B cell (primary cell): ENCODE measurements at regions of chr1 and their contacts with region 1.

Region 1: DNA sequence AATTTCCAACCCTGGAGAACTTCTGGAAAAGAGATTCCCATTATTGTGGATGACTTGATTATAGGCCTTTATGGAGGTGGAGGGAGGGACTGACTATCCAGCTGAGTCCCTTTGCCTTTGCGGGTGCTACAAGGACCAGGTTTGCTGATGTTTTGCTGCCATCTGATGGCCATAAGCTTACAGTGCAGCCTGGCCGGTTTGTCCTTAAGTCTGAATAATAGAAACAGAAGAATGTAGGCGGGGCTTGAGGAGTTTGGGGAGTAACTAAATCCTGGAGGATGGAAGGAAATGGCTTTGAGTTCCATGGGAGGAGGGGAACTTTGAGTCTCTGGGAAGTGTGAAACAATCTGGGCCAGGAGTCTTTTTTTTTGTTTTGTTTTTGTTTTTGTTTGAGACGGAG is 55.7 kb upstream of the CD1D start:
- DNase-seq: peak; percentile 86
- ATAC-seq: peak; percentile 89
- H3K4me3 ChIP-seq: no peak overlapping the region
- H3K4me3 Mint-ChIP-seq: no peak overlapping the region
- H3K27ac ChIP-seq: no peak overlapping the region
- H3K27ac Mint-ChIP-seq: peak overlapping the region; percentile 5
- H3K4me1 ChIP-seq: peaks cover 0 to 5% of the 10 kb centered on the region in 2 donors
- H3K4me1 Mint-ChIP-seq: peaks cover 3% of the 10 kb centered on the region
- H3K27me3 ChIP-seq: peaks cover 0 to 18% (median 9%) of the 10 kb centered on the region in 4 experiments
- H3K27me3 Mint-ChIP-seq: peaks cover 25% of the 10 kb centered on the region
- CTCF ChIP-seq: peak; percentile 86

Region 2: DNA sequence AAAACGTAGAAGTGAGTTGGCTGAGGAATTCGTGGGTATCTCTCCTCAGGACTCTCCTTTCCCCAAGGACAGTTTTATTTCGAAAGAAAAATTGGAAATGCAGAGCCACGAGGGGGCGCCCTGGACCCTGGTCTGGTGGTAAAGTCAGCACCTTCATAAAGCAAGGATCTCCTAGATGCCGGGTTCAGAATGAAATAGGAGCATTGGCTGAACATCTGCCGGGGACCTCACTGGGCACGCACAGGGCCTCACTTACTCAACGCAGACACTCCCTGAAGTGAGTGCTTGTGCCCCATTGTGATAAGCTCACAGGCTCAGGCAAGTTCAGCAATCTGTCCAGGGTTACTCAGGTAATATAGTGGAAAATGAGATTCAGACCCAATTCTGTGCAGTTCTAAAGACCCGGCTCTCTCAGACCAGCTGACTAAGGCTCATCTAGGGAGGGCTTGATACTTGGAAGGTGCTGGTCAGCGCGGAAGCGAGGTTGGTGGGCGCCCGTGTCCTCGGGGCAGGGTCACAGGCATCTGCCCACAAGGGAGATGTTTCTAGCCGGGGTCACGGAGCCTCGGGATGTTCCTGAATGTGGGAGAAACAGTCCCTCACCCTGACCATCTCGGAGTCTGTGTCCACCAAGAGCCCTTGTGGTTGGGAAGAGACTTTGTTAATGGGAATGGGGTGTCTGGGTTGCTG is 931.2 kb before region 1 on chr1:
- CTCF ChIA-PET with region 1: interaction called, 10 read pairs
- POLR2A ChIA-PET with region 1: no interaction called
- intact Hi-C with region 1: loop called (anchors 1 kb)
- DNase-seq: peak; percentile 76
- ATAC-seq: no peak
- H3K4me3 ChIP-seq: no peak overlapping the region
- H3K4me3 Mint-ChIP-seq: no peak overlapping the region
- H3K27ac ChIP-seq: no peak overlapping the region
- H3K27ac Mint-ChIP-seq: no peak overlapping the region
- H3K4me1 ChIP-seq: peaks cover 3 to 4% of the 10 kb centered on the region in 2 donors
- H3K4me1 Mint-ChIP-seq: peaks cover 2% of the 10 kb centered on the region
- H3K27me3 ChIP-seq: peaks cover 0 to 34% (median 10%) of the 10 kb centered on the region in 4 experiments
- H3K27me3 Mint-ChIP-seq: peaks cover 42% of the 10 kb centered on the region
- CTCF ChIP-seq: peak; percentile 76

Region 3: DNA sequence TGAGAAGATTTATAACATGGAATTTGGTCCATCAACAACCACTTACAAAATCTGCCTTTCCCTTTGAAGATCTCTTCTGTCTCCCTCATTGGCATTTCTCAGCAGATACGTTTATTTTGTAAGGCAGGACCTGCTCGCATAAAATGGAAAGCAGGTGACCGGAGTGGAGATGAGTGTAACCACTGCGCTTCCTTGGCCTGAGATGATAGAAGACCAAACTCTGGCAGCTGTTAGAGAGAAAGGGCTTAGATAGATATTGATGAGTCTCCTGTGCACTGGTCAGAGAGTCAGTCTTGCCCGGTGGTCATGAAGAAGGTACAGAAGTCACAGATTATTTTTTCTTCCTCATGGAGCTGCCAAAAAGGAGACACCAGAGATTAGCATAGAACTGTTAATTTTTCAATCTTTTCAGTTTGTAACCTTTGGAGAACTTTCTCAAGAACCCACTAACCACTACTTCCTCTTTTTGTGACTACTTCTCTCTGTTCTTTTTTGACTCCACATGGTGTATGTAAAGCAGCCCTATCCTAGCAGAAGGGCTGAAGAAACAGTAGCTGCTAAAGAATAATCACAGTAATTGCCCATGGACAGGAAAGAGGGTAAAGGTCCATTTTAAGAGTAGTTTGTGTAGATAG is 472.0 kb before region 1 on chr1:
- CTCF ChIA-PET with region 1: no interaction called
- POLR2A ChIA-PET with region 1: no interaction called
- intact Hi-C with region 1: no loop called
- DNase-seq: peak; percentile 79
- ATAC-seq: peak; percentile 96
- H3K4me3 ChIP-seq: peak overlapping the region in 3 of 5 experiments; percentile 12 to 45 (median 41)
- H3K4me3 Mint-ChIP-seq: peak overlapping the region; percentile 75
- H3K27ac ChIP-seq: peak overlapping the region; percentile 14
- H3K27ac Mint-ChIP-seq: peak overlapping the region; percentile 43
- H3K4me1 ChIP-seq: peaks cover 33 to 42% of the 10 kb centered on the region in 2 donors
- H3K4me1 Mint-ChIP-seq: peaks cover 39% of the 10 kb centered on the region
- H3K27me3 ChIP-seq: no peaks in the 10 kb centered on the region
- H3K27me3 Mint-ChIP-seq: no peaks in the 10 kb centered on the region
- CTCF ChIP-seq: no peak

Region 4: GRCh38 chr1:157948312-157949073 is 176.5 kb before region 1 on chr1:
- CTCF ChIA-PET with region 1: interaction called, 13 read pairs
- POLR2A ChIA-PET with region 1: no interaction called
- intact Hi-C with region 1: no loop called
- DNase-seq: peak; percentile 63
- ATAC-seq: peak; percentile 53
- H3K4me3 ChIP-seq: no peak overlapping the region
- H3K4me3 Mint-ChIP-seq: no peak overlapping the region
- H3K27ac ChIP-seq: no peak overlapping the region
- H3K27ac Mint-ChIP-seq: no peak overlapping the region
- H3K4me1 ChIP-seq: peaks cover 17 to 18% of the 10 kb centered on the region in 2 donors
- H3K4me1 Mint-ChIP-seq: peaks cover 27% of the 10 kb centered on the region
- H3K27me3 ChIP-seq: peaks cover 0 to 8% (median 0%) of the 10 kb centered on the region in 4 experiments
- H3K27me3 Mint-ChIP-seq: peaks cover 12% of the 10 kb centered on the region
- CTCF ChIP-seq: peak; percentile 67

Region 5: DNA sequence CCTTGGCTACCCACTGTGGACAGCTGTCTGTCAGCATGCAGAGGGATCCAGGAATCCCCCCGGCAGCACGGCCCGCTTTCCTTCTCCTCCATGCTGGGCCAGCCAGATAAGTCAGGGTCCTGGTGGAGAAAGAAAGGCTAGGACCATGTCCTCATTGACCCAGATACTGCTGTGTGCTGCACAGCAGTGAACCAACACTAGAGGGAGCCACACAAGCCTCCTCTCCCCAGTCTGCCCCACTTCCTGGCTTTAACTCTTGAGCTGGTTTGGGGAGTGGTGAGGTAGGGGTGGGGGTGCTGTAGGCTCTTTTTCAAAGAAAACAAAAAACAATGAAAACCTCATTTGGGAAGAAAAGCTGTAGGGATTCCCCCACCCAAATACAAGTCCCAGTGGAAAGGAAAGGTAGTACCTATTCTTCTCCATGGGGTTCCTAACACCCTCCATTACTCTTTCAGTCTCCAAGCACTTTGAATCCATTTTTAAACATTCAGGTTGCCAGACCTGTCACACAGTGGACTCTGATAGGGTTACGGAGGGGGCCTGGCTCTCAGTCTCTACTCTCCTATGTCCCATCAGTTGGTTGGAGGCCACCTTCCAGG is 29.2 kb before region 1 on chr1:
- CTCF ChIA-PET with region 1: interaction called, 126 read pairs
- POLR2A ChIA-PET with region 1: no interaction called
- intact Hi-C with region 1: no loop called
- DNase-seq: peak; percentile 49
- ATAC-seq: peak; percentile 51
- H3K4me3 ChIP-seq: no peak overlapping the region
- H3K4me3 Mint-ChIP-seq: no peak overlapping the region
- H3K27ac ChIP-seq: no peak overlapping the region
- H3K27ac Mint-ChIP-seq: no peak overlapping the region
- H3K4me1 ChIP-seq: no peaks in the 10 kb centered on the region
- H3K4me1 Mint-ChIP-seq: no peaks in the 10 kb centered on the region
- H3K27me3 ChIP-seq: no peaks in the 10 kb centered on the region
- H3K27me3 Mint-ChIP-seq: peaks cover 13% of the 10 kb centered on the region
- CTCF ChIP-seq: peak; percentile 65

Region 6: GRCh38 chr1:158163000-158163947 is 38.3 kb after region 1 on chr1:
- CTCF ChIA-PET with region 1: interaction called, 10 read pairs
- POLR2A ChIA-PET with region 1: no interaction called
- intact Hi-C with region 1: no loop called
- DNase-seq: peak; percentile 42
- ATAC-seq: peak; percentile 92
- H3K4me3 ChIP-seq: peak overlapping the region in 2 of 5 experiments; percentile 3 to 32
- H3K4me3 Mint-ChIP-seq: peak overlapping the region; percentile 78
- H3K27ac ChIP-seq: peak overlapping the region in 1 of 2 donors; percentile 21
- H3K27ac Mint-ChIP-seq: peak overlapping the region; percentile 68
- H3K4me1 ChIP-seq: peaks cover 33 to 40% of the 10 kb centered on the region in 2 donors
- H3K4me1 Mint-ChIP-seq: peaks cover 35% of the 10 kb centered on the region
- H3K27me3 ChIP-seq: no peaks in the 10 kb centered on the region
- H3K27me3 Mint-ChIP-seq: no peaks in the 10 kb centered on the region
- CTCF ChIP-seq: peak; percentile 23

Region 7: GRCh38 chr1:158227904-158228623 is 103.1 kb after region 1 on chr1:
- CTCF ChIA-PET with region 1: no interaction called
- POLR2A ChIA-PET with region 1: no interaction called
- intact Hi-C with region 1: no loop called
- DNase-seq: no peak
- ATAC-seq: no peak
- H3K4me3 ChIP-seq: no peak overlapping the region
- H3K4me3 Mint-ChIP-seq: no peak overlapping the region
- H3K27ac ChIP-seq: no peak overlapping the region
- H3K27ac Mint-ChIP-seq: no peak overlapping the region
- H3K4me1 ChIP-seq: no peaks in the 10 kb centered on the region
- H3K4me1 Mint-ChIP-seq: no peaks in the 10 kb centered on the region
- H3K27me3 ChIP-seq: no peaks in the 10 kb centered on the region
- H3K27me3 Mint-ChIP-seq: peaks cover 8% of the 10 kb centered on the region
- CTCF ChIP-seq: no peak